Mammary epithelial cell (primary cell): ENCODE measurements at regions of chr19 and their contacts with region 1.

Region 1: GRCh38 chr19:52993323-52994178 is 20.2 kb upstream of the ERVV-1 start:
- DNase-seq: peak; percentile 71
- H3K4me3 ChIP-seq: peak overlapping the region; percentile 42 to 47 (median 44)
- H3K27ac ChIP-seq: no peak overlapping the region
- H3K4me1 ChIP-seq: peaks cover 10% of the 10 kb centered on the region
- H3K27me3 ChIP-seq: no peaks in the 10 kb centered on the region
- CTCF ChIP-seq: peak in 1 of 2 donors; percentile 56

Region 2: GRCh38 chr19:52451241-52451640 is 542.3 kb before region 1 on chr19:
- CTCF ChIA-PET with region 1: no interaction called
- dilution Hi-C with region 1: no loop called
- in situ Hi-C with region 1: no loop called
- intact Hi-C with region 1: no loop called
- DNase-seq: no peak
- H3K4me3 ChIP-seq: no peak overlapping the region
- H3K27ac ChIP-seq: no peak overlapping the region
- H3K4me1 ChIP-seq: no peaks in the 10 kb centered on the region
- H3K27me3 ChIP-seq: no peaks in the 10 kb centered on the region
- CTCF ChIP-seq: no peak

Region 3: DNA sequence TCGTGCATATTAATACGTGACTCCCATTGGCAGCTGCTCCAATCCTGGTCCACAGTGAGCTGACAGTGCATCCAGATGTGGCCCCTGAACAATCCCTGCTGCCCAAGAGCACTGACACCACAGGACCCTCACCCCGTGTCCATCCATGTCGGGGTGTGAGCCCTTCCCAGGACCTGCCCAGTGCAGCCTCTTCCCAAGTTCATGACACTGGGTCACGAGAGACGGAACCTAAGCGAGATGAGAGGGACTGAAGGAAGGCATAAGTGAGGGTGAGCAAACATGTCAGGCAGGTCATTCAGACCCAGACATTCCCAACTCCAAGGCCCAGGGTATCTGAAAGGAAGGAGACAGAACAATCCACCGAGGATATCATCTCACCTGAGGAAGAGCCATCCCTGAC is 139.7 kb before region 1 on chr19:
- CTCF ChIA-PET with region 1: no interaction called
- dilution Hi-C with region 1: no loop called
- in situ Hi-C with region 1: no loop called
- intact Hi-C with region 1: loop called (anchors 10 kb)
- DNase-seq: no peak
- H3K4me3 ChIP-seq: no peak overlapping the region
- H3K27ac ChIP-seq: no peak overlapping the region
- H3K4me1 ChIP-seq: peaks cover 3% of the 10 kb centered on the region
- H3K27me3 ChIP-seq: no peaks in the 10 kb centered on the region
- CTCF ChIP-seq: no peak

Region 4: DNA sequence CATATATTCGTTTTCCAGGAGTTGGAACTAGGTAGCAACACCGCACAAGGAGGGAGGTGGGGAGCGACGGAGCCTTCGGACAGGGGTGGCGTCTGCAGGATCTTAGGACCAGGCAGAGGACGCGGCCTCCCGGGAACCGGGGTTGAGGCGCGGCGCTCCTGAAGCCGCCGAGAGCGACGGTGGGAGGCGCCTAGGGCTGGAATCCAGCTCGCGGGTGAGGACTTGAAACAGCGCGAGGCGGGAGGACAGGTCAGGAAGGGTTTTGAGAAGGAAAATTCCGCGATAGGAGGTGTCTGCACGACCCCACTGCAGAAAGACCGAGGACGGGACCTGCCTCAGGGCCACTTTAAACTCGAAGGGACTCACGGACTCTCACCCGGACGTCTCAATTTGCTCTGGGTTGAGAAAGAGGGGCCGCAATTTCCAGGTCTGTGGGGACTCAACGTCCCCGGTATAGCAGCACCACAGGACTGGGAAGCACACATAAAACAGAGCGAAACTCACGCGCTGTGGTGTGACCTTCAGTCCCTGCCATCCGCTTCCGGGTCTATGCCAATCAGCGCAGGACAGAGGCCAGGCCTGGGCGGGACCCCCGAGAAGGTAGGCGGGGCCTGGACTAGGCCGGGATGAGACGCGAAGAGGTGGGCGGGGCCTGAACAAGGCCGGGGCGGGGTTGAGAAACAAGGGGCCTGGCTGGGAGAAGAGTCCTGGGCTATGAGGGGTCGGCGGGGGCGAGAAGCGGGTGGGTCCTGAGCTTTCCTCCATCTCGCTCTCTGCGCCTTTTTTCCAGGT is 96.2 kb before region 1 on chr19 and contains the start of gene ZNF320:
- CTCF ChIA-PET with region 1: no interaction called
- dilution Hi-C with region 1: no loop called
- in situ Hi-C with region 1: no loop called
- intact Hi-C with region 1: loop called (anchors 5 kb)
- DNase-seq: peak; percentile 88
- H3K4me3 ChIP-seq: peak within 1 kb of the TSS; percentile 62 to 95 (median 70)
- H3K27ac ChIP-seq: peak within 1 kb of the TSS; percentile 80
- H3K4me1 ChIP-seq: no peaks in the 10 kb centered on the region
- H3K27me3 ChIP-seq: no peaks in the 10 kb centered on the region
- CTCF ChIP-seq: no peak
- total RNA-seq, gene ZNF320: 13.3 to 18.5 TPM

Region 5: DNA sequence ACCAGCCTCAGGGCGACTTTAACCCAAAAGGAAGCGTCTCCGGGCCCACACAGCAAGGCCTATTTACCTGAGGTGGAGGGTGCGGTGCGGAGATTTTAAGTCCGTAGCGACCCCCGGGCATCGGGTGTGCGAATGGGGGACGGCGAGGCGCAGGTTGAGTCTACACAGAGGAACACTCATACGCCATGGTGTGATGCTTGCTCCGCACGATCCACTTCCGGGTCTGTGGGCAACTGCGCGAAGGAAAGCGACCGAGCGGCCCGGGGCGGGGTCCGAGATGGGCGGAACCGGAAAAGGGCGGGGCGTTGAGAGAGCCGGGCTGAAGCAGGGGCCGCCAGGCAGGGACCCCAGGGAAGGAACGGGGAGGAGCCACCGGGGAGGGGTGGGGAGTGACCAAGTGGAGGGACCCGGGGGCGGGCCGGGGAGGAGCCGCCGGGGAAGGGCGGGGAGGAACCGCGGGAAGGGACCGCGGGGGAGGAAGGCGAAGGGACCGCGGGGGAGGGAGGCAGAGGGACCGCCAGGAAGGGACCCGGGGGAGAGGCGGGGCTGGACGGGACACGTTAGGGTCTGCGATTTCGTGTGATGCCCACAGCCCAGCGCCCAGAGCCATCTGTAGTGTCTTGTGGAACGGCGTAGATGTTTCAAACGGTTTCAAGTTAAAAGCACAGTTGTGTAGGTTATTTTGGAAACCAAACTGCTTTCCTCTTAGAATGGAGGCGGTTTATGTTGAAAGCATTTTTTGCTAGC is 109.8 kb after region 1 on chr19 and contains the start of gene ZNF160:
- CTCF ChIA-PET with region 1: no interaction called
- dilution Hi-C with region 1: no loop called
- in situ Hi-C with region 1: no loop called
- intact Hi-C with region 1: loop called (anchors 2 kb)
- DNase-seq: peak; percentile 94
- H3K4me3 ChIP-seq: peak within 1 kb of the TSS; percentile 69 to 100 (median 98)
- H3K27ac ChIP-seq: peak within 1 kb of the TSS; percentile 82
- H3K4me1 ChIP-seq: peaks cover 12% of the 10 kb centered on the region
- H3K27me3 ChIP-seq: no peaks in the 10 kb centered on the region
- CTCF ChIP-seq: no peak
- total RNA-seq, gene ZNF160: 23.4 to 33.0 TPM